Posterior cingulate gyrus (tissue), 11 donors: ENCODE measurements at regions of chr2 and their contacts with region 1.

Region 1: GRCh38 chr2:27095745-27096651 is 9.4 kb downstream of the KHK start:
- DNase-seq: peak; percentile 66 to 96 (median 72)

Region 2: GRCh38 chr2:27191053-27191829 is 95.2 kb after region 1 on chr2:
- intact Hi-C with region 1: loop called (anchors 1 kb)
- DNase-seq: peak in 6 of 10 donors; percentile 17 to 87 (median 37)

Region 3: DNA sequence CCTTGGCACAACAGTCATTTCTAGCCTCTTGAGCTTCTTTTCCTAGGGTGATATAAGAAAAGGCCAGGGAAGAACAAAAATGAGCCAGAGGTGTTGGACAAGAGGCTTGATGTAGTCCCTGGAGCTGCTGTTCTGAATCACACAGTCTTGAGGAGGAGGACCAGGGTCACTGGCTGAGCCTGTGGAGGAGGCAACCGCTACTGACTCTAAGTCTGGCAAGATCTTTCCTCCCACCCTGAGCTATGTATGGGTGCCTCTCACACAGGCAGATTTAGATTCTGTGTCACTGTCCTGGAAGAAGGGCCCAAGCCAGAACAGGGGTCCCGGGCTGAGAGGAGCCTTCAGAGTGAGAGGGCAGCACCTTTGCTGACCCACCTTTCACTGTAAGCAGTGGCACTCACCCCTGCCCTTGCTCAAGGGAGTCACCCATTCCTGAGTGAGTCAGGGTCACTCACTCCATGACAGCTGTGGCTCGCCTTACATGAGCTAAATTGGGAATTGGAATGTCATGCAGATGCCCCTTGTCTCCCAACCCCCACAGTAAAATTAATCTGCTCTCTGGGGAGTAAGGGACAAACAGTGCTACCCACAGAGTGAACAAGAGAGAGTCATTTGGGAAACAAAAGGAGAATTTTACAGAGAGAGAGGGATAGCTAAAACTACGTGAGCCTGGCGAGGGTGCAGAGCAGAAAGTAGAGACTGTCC is 186.0 kb after region 1 on chr2 and contains the start of gene TRIM54:
- intact Hi-C with region 1: loop called (anchors 5 kb)
- DNase-seq: no peak

Region 4: GRCh38 chr2:27303093-27304025 is 207.4 kb after region 1 on chr2:
- intact Hi-C with region 1: loop called (anchors 2 kb)
- DNase-seq: peak in 3 of 10 donors; percentile 23 to 70 (median 42)